Endothelial cell of umbilical vein (primary cell): ENCODE measurements at regions of chr10 and their contacts with region 1.

Region 1: DNA sequence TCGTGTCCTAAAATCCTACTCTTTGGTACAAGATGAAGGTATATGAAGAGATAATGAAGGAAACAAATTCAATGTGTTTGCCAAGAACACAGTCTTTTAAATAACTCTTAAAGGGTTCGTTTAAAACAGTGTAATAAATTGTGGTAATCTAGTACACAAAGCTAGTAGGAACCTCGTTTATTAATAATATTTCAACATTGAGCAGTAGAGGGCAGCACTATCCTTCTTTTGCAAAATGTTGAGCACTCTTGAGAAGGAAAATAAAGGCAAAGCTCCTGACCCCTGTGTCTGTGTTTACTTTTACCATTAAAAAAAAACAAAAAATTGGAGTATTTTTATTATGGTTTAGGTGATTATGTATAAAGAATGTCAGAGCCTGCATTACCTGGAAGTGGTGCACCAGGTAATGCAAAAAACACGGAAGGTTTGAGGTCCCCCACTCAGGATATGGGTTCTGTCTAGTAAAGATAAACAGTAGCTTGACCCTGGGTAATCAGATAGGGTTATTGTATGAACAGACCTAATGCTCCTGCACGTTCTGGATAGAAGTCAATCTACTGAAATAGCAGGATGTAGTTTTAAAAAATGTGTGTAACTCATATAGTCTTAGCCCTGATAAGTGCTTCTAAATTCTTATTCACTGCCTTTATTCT is 5.7 kb upstream of the GOT1 start:
- DNase-seq: peak; percentile 64
- H3K4me3 ChIP-seq: no peak overlapping the region
- H3K27ac ChIP-seq: no peak overlapping the region
- H3K4me1 ChIP-seq: peaks cover 7% of the 10 kb centered on the region
- H3K27me3 ChIP-seq: no peaks in the 10 kb centered on the region
- CTCF ChIP-seq: peak; percentile 21 to 23
- POLR2A ChIP-seq: no peak

Region 2: DNA sequence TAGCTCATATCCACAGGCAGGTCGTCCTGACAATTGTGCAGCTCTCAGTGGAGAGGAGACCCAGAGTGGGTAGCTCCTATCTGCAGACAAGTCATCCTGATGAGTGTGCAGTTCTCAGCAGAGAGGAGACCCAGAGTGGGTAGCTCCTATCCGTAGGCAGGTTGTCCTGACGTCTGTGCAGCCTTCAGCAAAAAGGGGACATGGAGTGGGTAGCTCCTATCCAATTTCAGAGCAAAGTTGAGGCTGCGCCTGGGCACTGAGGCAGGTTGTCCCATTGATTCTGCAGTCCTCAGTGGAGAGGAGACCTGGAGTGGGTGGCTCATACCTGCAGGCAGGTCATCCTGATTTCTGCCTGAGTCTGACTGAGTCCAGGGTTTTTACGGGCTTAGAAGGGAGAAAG is 312.3 kb before region 1 on chr10:
- CTCF ChIA-PET with region 1: no interaction called
- POLR2A ChIA-PET with region 1: no interaction called
- dilution Hi-C with region 1: no loop called
- intact Hi-C with region 1: no loop called
- DNase-seq: no peak
- H3K4me3 ChIP-seq: no peak overlapping the region
- H3K27ac ChIP-seq: no peak overlapping the region
- H3K4me1 ChIP-seq: no peaks in the 10 kb centered on the region
- H3K27me3 ChIP-seq: no peaks in the 10 kb centered on the region
- CTCF ChIP-seq: no peak
- POLR2A ChIP-seq: no peak

Region 3: DNA sequence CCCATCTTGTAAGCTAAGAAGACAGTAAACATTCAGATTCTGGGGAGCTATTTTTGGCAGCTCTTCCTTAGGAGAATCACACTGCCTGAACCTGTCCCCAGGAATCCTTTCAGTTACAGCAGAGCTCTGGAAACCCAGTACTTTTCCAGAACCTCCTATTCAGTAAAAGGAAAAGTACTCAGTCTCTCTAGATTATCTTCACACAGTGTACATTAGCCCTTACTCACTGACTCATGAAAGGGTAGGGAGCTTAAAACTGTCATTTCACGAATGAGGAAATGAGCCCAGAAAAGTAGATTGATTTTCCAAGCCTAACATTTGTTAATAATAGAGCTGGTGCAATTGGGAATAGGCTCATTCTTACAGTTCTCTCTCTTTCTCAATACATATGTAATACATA is 110.8 kb before region 1 on chr10:
- CTCF ChIA-PET with region 1: no interaction called
- POLR2A ChIA-PET with region 1: no interaction called
- dilution Hi-C with region 1: no loop called
- intact Hi-C with region 1: no loop called
- DNase-seq: no peak
- H3K4me3 ChIP-seq: no peak overlapping the region
- H3K27ac ChIP-seq: no peak overlapping the region
- H3K4me1 ChIP-seq: no peaks in the 10 kb centered on the region
- H3K27me3 ChIP-seq: peaks cover 13 to 18% of the 10 kb centered on the region in 2 experiments
- CTCF ChIP-seq: no peak
- POLR2A ChIP-seq: no peak

Region 4: DNA sequence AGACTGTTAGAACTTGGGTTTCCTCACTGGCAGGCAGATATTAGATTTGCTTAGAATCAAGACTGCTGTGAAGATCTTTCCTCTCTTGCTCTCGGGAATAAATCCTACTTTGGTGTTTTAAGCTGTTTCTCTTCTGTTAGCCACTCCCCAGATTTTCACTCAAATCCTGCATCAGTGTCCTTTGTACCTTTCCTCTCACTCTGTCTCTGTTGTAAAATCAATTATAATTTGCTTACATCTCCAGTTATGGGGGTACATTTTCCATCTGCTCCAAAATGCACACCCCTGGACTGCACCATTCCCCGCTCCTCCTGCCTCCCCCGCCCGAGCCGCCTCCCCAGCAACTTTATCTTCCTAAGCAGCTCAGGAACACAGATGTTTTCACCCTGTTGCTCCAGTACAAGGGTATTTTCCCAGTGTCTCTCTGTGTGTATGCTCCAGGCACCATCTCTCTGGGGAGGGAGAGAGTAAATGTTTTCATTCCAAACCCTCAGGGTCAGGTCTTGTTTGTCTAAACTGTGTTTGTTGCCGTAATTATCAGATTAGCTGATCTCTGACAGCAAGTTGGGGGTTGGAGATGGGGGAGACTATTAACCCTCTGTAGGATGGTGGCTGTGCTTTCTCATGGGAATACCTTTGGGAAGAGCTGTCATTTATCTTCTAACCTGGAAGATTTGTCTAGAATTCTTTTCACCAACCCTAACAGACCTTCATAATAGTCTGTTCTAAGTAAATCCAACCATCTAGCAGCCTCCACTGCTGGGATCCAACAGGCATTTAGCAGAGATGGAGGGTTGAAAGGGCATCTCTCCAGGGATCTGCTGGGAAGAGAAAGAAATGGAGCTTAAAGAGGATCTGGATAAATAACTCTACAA is 14.7 kb after region 1 on chr10:
- CTCF ChIA-PET with region 1: interaction called, 23 read pairs
- POLR2A ChIA-PET with region 1: no interaction called
- dilution Hi-C with region 1: no loop called
- intact Hi-C with region 1: no loop called
- DNase-seq: no peak
- H3K4me3 ChIP-seq: no peak overlapping the region
- H3K27ac ChIP-seq: no peak overlapping the region
- H3K4me1 ChIP-seq: no peaks in the 10 kb centered on the region
- H3K27me3 ChIP-seq: peaks cover 55 to 78% of the 10 kb centered on the region in 2 experiments
- CTCF ChIP-seq: no peak
- POLR2A ChIP-seq: no peak

Region 5: GRCh38 chr10:99513061-99513460 is 76.9 kb after region 1 on chr10:
- CTCF ChIA-PET with region 1: interaction called, 11 read pairs
- POLR2A ChIA-PET with region 1: no interaction called
- dilution Hi-C with region 1: no loop called
- intact Hi-C with region 1: no loop called
- DNase-seq: no peak
- H3K4me3 ChIP-seq: no peak overlapping the region
- H3K27ac ChIP-seq: no peak overlapping the region
- H3K4me1 ChIP-seq: no peaks in the 10 kb centered on the region
- H3K27me3 ChIP-seq: peaks cover 24 to 26% of the 10 kb centered on the region in 2 experiments
- CTCF ChIP-seq: no peak
- POLR2A ChIP-seq: no peak

Region 6: GRCh38 chr10:99548041-99548530 is 112.0 kb after region 1 on chr10:
- CTCF ChIA-PET with region 1: interaction called, 153 read pairs
- POLR2A ChIA-PET with region 1: no interaction called
- dilution Hi-C with region 1: no loop called
- intact Hi-C with region 1: loop called (anchors 1 kb)
- DNase-seq: peak; percentile 47
- H3K4me3 ChIP-seq: no peak overlapping the region
- H3K27ac ChIP-seq: no peak overlapping the region
- H3K4me1 ChIP-seq: no peaks in the 10 kb centered on the region
- H3K27me3 ChIP-seq: peaks cover 24 to 48% of the 10 kb centered on the region in 2 experiments
- CTCF ChIP-seq: peak in 1 of 2 donors; percentile 67
- POLR2A ChIP-seq: no peak

Region 7: DNA sequence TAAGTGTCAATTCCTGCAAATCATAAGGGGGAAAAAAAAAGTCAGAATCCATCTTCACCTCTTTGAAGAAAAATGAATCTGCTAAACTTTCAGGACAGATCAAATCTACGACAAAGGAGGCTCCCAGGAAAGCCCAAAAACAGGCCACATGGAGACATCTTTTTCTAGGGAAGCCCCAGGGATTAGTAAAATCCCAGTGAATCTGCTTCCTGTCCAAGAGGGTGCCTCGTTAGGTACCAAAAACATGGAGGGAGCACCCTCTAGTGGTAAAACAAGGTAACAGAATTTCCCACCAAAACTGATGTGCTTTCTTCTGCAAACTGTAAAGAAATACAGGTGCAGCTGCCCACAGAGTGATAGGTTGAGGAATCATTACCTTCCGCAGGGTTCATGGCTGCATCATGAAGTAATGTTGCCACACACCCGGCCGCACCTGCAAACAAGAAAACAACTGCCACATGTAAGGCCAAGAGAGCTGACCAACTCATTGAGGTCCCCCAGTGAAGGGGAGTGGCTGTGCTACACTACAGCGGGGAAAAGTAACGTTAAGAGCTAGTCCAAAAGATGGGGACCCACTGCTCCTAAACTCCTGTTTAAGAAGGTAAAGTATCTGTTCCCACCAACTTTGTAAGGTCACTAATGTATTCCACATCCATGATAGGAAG is 176.2 kb after region 1 on chr10:
- CTCF ChIA-PET with region 1: interaction called, 233 read pairs
- POLR2A ChIA-PET with region 1: no interaction called
- dilution Hi-C with region 1: loop called (anchors 25 kb)
- intact Hi-C with region 1: loop called (anchors 1 kb)
- DNase-seq: peak; percentile 71
- H3K4me3 ChIP-seq: no peak overlapping the region
- H3K27ac ChIP-seq: no peak overlapping the region
- H3K4me1 ChIP-seq: peaks cover 2% of the 10 kb centered on the region
- H3K27me3 ChIP-seq: no peaks in the 10 kb centered on the region
- CTCF ChIP-seq: peak; percentile 66 to 67
- POLR2A ChIP-seq: no peak

Region 8: DNA sequence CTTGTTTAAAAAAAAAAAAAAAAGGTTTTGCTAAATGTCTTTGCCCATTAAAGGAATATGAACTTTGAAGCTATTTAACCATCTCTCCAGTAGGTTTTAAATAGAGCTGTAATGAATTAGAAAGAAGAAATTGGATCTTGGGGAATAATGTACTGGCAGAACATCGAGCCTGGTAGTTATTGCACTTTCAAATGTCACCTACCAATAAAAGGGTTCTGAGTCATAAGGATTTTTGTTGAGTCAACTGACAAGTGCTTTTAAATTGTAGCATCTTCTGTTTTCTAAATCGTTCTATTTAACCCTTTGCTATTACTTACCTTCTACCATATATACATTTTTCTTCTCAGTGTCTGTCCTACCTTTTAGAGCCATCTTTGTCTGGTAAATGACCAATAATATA is 306.6 kb after region 1 on chr10:
- CTCF ChIA-PET with region 1: no interaction called
- POLR2A ChIA-PET with region 1: no interaction called
- dilution Hi-C with region 1: no loop called
- intact Hi-C with region 1: no loop called
- DNase-seq: no peak
- H3K4me3 ChIP-seq: no peak overlapping the region
- H3K27ac ChIP-seq: no peak overlapping the region
- H3K4me1 ChIP-seq: no peaks in the 10 kb centered on the region
- H3K27me3 ChIP-seq: no peaks in the 10 kb centered on the region
- CTCF ChIP-seq: no peak
- POLR2A ChIP-seq: no peak

Region 9: GRCh38 chr10:100114976-100115770 is 679.1 kb after region 1 on chr10:
- CTCF ChIA-PET with region 1: no interaction called
- POLR2A ChIA-PET with region 1: no interaction called
- dilution Hi-C with region 1: no loop called
- intact Hi-C with region 1: no loop called
- DNase-seq: no peak
- H3K4me3 ChIP-seq: no peak overlapping the region
- H3K27ac ChIP-seq: no peak overlapping the region
- H3K4me1 ChIP-seq: no peaks in the 10 kb centered on the region
- H3K27me3 ChIP-seq: peaks cover 2 to 5% of the 10 kb centered on the region in 2 experiments
- CTCF ChIP-seq: no peak
- POLR2A ChIP-seq: no peak